Left lung (tissue), 14 donors: ENCODE measurements at regions of chr14 and their contacts with region 1.

Region 1: DNA sequence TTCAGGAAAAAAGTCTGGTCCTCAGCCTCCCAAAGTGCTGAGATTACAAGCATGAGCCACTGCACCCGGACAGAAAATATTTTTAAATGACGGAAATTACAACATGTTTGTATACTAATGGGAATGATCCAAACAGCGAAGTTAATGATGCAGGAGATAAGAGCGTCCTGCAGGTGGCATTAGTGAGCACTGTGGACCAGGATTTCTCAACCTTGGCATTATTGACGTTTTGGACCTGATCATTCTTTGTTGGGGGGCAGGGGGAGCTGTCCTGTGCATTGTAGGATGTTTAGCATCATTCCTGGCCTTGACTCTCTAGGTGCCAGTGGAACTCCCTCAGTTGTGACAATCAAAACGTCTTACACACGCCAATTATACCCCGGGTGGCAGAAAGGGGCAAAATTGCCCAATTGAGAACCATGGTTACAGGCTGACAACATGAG is 34.1 kb downstream of the SCFD1 start:
- DNase-seq: peak in 2 of 4 donors; percentile 12 to 30
- ATAC-seq: peak; percentile 89
- H3K4me3 ChIP-seq: no peak overlapping the region
- H3K27ac ChIP-seq: no peak overlapping the region
- H3K4me1 ChIP-seq: peaks cover 0 to 8% of the 10 kb centered on the region in 2 donors
- H3K27me3 ChIP-seq: no peaks in the 10 kb centered on the region
- CTCF ChIP-seq: peak; percentile 46 to 52

Region 2: GRCh38 chr14:30462358-30462757 is 193.9 kb before region 1 on chr14:
- intact Hi-C with region 1: no loop called
- DNase-seq: no peak
- ATAC-seq: no peak
- H3K4me3 ChIP-seq: no peak overlapping the region
- H3K27ac ChIP-seq: no peak overlapping the region
- H3K4me1 ChIP-seq: no peaks in the 10 kb centered on the region
- H3K27me3 ChIP-seq: no peaks in the 10 kb centered on the region
- CTCF ChIP-seq: no peak

Region 3: GRCh38 chr14:30822080-30822571 is 165.9 kb after region 1 on chr14:
- intact Hi-C with region 1: no loop called
- DNase-seq: no peak
- ATAC-seq: no peak
- H3K4me3 ChIP-seq: no peak overlapping the region
- H3K27ac ChIP-seq: no peak overlapping the region
- H3K4me1 ChIP-seq: no peaks in the 10 kb centered on the region
- H3K27me3 ChIP-seq: no peaks in the 10 kb centered on the region
- CTCF ChIP-seq: no peak

Region 4: DNA sequence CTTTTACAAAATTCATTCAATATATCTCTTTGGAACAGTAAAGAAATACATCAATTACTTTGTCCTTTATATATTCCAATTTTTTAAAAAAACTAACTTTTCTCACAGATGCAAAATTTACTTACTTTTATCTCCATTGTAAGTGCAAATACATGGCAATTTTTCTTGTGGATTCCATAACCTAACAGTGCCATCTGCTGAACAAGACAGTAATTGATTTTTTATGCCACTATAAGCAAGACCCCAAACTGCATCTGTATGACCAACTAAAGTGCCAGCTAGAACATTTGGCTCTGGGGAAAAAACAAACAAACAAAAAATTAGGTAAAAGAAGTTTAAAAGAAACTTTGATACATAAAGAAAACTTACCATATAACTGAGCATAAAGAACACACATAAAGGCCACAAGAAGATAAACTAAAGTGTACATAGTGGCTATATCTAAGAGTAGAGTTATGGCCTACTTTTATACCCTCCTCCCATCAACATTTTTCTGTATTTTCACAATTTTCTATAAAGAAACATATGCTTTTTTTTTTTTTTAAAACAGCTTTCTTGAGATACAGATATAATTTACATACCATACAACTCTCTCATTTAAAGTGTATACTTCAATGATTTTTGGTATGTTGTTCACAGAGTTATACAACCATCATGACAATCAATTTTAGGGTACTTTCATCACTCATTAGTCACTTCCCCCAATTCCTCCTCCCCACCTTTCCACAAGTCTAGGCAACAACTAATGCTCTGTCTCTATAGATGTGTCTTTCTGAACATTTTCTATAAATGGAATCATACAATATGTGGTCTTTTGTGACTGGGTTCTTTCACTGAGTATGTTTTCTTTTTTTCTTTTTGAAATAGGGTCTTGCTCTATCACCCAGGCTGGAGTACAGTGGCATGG is 250.8 kb after region 1 on chr14:
- intact Hi-C with region 1: loop called in 1 of 2 experiments (anchors 10 kb)
- DNase-seq: peak in 1 of 4 donors; percentile 24
- ATAC-seq: peak; percentile 41
- H3K4me3 ChIP-seq: no peak overlapping the region
- H3K27ac ChIP-seq: no peak overlapping the region
- H3K4me1 ChIP-seq: no peaks in the 10 kb centered on the region
- H3K27me3 ChIP-seq: no peaks in the 10 kb centered on the region
- CTCF ChIP-seq: peak in 1 of 2 donors; percentile 10